Activated CD4-positive, alpha-beta T cell treated with anti-CD3 and anti-CD28 coated beads for 36 hours (primary cell): ENCODE measurements at regions of chr17 and their contacts with region 1.

Region 1: GRCh38 chr17:76458580-76459490 is 5.9 kb upstream of the UBE2O start:
- DNase-seq: peak; percentile 48
- ATAC-seq: peak; percentile 33
- H3K4me3 Mint-ChIP-seq: no peak overlapping the region
- H3K27ac Mint-ChIP-seq: no peak overlapping the region
- H3K4me1 Mint-ChIP-seq: no peaks in the 10 kb centered on the region
- H3K27me3 Mint-ChIP-seq: no peaks in the 10 kb centered on the region

Region 2: GRCh38 chr17:76408052-76408849 is 50.6 kb before region 1 on chr17:
- CTCF ChIA-PET with region 1: interaction called, 10 read pairs
- POLR2A ChIA-PET with region 1: no interaction called
- intact Hi-C with region 1: loop called in 1 of 2 experiments (anchors 5 kb)
- DNase-seq: peak; percentile 84
- ATAC-seq: peak; percentile 90
- H3K4me3 Mint-ChIP-seq: no peak overlapping the region
- H3K27ac Mint-ChIP-seq: no peak overlapping the region
- H3K4me1 Mint-ChIP-seq: peaks cover 8% of the 10 kb centered on the region
- H3K27me3 Mint-ChIP-seq: no peaks in the 10 kb centered on the region